ENCODE measurements at regions of chr21 and their contacts with region 1.

Region 1: DNA sequence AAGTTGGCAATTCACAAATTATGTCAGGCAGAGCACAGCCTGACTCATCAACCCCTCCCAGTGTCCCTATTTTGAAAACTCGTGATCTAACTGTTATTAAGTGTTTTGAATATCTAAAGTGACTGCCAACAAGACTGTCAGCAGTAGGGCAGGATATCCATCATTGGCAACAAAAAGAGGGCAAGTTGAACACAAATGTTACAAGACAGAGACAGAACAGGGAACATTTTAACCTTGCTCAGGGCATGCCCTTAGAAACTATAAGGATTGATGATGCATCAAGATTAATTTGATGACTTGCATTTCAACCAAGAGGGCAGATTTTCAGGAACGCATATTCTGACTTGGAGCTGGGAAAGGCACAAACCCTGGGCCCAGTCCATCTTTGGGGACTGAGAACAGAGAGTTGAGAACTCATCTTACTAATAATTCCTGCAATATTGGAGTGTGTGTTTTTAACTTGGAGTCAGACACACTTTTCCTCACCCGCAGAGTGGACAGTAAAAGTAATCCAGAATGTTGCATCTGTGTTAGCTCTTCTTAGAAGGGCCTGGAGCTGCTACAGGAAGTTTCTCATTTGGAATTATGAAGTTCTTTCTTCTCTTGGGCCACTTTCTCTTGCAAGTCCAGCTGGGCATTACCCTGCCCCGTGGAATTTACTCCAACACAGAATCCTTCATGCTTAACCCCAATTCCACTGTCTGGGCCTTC is 317.2 kb downstream of the LTN1 start:
- DNase-seq: peak; percentile 21
- H3K4me3 Mint-ChIP-seq: no peak overlapping the region
- H3K27ac Mint-ChIP-seq: peak overlapping the region; percentile 86
- H3K4me1 Mint-ChIP-seq: peaks cover 10% of the 10 kb centered on the region
- H3K27me3 Mint-ChIP-seq: no peaks in the 10 kb centered on the region
- CTCF ChIP-seq: no peak

Region 2: DNA sequence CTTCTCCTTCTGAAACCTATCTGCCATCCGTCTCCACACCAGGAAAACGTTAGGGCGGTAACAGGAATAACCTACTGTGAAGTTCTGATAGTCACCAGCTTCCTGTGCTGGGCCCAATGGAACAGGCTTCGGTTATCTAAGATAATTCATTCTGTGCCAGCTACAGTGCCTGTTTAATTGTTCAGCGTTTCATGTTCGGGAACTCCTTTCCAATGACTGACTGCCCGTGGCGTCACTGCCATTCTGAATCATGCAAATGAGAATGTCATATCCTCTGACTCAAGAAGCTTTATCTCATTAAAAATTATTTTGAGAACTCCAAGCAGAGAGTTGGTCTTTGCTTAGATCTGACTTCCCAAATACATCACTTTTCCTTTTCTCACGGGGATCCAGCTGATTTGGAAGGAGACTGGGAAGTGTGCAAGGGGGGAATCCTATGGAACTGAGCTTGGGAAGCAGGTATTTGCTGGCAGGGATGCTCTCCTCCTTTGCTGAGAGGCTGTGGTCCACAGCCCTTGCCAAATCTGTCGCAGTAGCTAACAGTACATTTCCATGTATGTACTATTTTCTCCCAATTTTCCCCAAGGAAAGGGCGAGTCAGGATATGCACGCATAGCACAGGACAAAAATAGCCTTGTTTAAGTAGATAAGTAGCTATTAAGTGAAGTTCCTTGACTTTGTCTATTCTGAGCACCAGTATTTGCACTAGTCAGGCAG is 41.5 kb before region 1 on chr21:
- CTCF ChIA-PET with region 1: interaction called, 3 read pairs
- POLR2A ChIA-PET with region 1: interaction called, 25 read pairs
- intact Hi-C with region 1: loop called (anchors 10 kb)
- DNase-seq: peak; percentile 68
- H3K4me3 Mint-ChIP-seq: no peak overlapping the region
- H3K27ac Mint-ChIP-seq: peak overlapping the region; percentile 84
- H3K4me1 Mint-ChIP-seq: peaks cover 44% of the 10 kb centered on the region
- H3K27me3 Mint-ChIP-seq: no peaks in the 10 kb centered on the region
- CTCF ChIP-seq: no peak

Measured in MCF 10A (cell line).